Naive thymus-derived CD4-positive, alpha-beta T cell (primary cell): ENCODE measurements at regions of chr19 and their contacts with region 1.

Region 1: GRCh38 chr19:49017666-49018351 is 918 bp upstream of the LHB start:
- DNase-seq: peak; percentile 49 to 71 (median 67)
- ATAC-seq: peak; percentile 91
- H3K4me3 ChIP-seq: peak overlapping the region; percentile 76
- H3K4me3 Mint-ChIP-seq: peak overlapping the region; percentile 78 to 95 (median 90)
- H3K27ac ChIP-seq: peak overlapping the region; percentile 48
- H3K27ac Mint-ChIP-seq: peak overlapping the region in 3 of 9 donors; percentile 28 to 45 (median 42)
- H3K4me1 ChIP-seq: peaks cover 0 to 4% of the 10 kb centered on the region in 2 donors
- H3K4me1 Mint-ChIP-seq: peaks cover 7 to 22% (median 18%) of the 10 kb centered on the region in 7 donors
- H3K27me3 ChIP-seq: no peaks in the 10 kb centered on the region
- H3K27me3 Mint-ChIP-seq: peaks cover 0 to 22% (median 0%) of the 10 kb centered on the region in 5 donors

Region 2: GRCh38 chr19:49056010-49056901 is 38.4 kb after region 1 on chr19:
- CTCF ChIA-PET with region 1: no interaction called
- POLR2A ChIA-PET with region 1: no interaction called
- intact Hi-C with region 1: loop called in 1 of 2 experiments (anchors 2 kb)
- DNase-seq: peak; percentile 33 to 75 (median 45)
- ATAC-seq: peak; percentile 86
- H3K4me3 ChIP-seq: peak overlapping the region; percentile 62
- H3K4me3 Mint-ChIP-seq: peak overlapping the region; percentile 67 to 99 (median 87)
- H3K27ac ChIP-seq: peak overlapping the region; percentile 45
- H3K27ac Mint-ChIP-seq: peak overlapping the region in 2 of 9 donors; percentile 32 to 36
- H3K4me1 ChIP-seq: peaks cover 11 to 14% of the 10 kb centered on the region in 2 donors
- H3K4me1 Mint-ChIP-seq: peaks cover 16 to 19% (median 17%) of the 10 kb centered on the region in 7 donors
- H3K27me3 ChIP-seq: peaks cover 0 to 10% of the 10 kb centered on the region in 2 donors
- H3K27me3 Mint-ChIP-seq: peaks cover 16 to 59% (median 30%) of the 10 kb centered on the region in 5 donors